Ovary (tissue), 10 donors: ENCODE measurements at regions of chr12 and their contacts with region 1.

Region 1: GRCh38 chr12:27523642-27524493 is at the start of gene PPFIBP1:
- DNase-seq: peak; percentile 99 to 100 (median 100)
- H3K4me3 ChIP-seq: peak within 1 kb of the TSS; percentile 82
- H3K27ac ChIP-seq: peak within 1 kb of the TSS; percentile 47 to 92
- H3K4me1 ChIP-seq: peaks cover 25% of the 10 kb centered on the region
- H3K27me3 ChIP-seq: no peaks in the 10 kb centered on the region
- CTCF ChIP-seq: peak in 1 of 3 donors; percentile 36
- EP300 ChIP-seq: no peak
- POLR2A ChIP-seq: peak; percentile 93
- total RNA-seq, gene PPFIBP1: 105 to 216 (median 162) TPM

Region 2: GRCh38 chr12:27449026-27449425 is 74.8 kb before region 1 on chr12:
- intact Hi-C with region 1: no loop called
- DNase-seq: no peak
- H3K4me3 ChIP-seq: no peak overlapping the region
- H3K27ac ChIP-seq: no peak overlapping the region
- H3K4me1 ChIP-seq: no peaks in the 10 kb centered on the region
- H3K27me3 ChIP-seq: no peaks in the 10 kb centered on the region
- CTCF ChIP-seq: no peak
- EP300 ChIP-seq: no peak
- POLR2A ChIP-seq: no peak

Region 3: GRCh38 chr12:27462151-27462694 is 61.6 kb before region 1 on chr12:
- intact Hi-C with region 1: loop called in 1 of 4 experiments (anchors 10 kb)
- DNase-seq: no peak
- H3K4me3 ChIP-seq: peak overlapping the region; percentile 3
- H3K27ac ChIP-seq: peak overlapping the region in 1 of 2 donors; percentile 61
- H3K4me1 ChIP-seq: peaks cover 6% of the 10 kb centered on the region
- H3K27me3 ChIP-seq: no peaks in the 10 kb centered on the region
- CTCF ChIP-seq: no peak
- EP300 ChIP-seq: no peak
- POLR2A ChIP-seq: no peak

Region 4: GRCh38 chr12:27627123-27627835 is 103.4 kb after region 1 on chr12:
- intact Hi-C with region 1: loop called in 2 of 4 experiments (anchors 10 kb)
- DNase-seq: peak in 2 of 5 donors; percentile 19 to 54
- H3K4me3 ChIP-seq: no peak overlapping the region
- H3K27ac ChIP-seq: peak overlapping the region in 1 of 2 donors; percentile 43
- H3K4me1 ChIP-seq: peaks cover 12% of the 10 kb centered on the region
- H3K27me3 ChIP-seq: no peaks in the 10 kb centered on the region
- CTCF ChIP-seq: no peak
- EP300 ChIP-seq: no peak
- POLR2A ChIP-seq: no peak